ENCODE measurements at regions of chr6 and their contacts with region 1.

Region 1: DNA sequence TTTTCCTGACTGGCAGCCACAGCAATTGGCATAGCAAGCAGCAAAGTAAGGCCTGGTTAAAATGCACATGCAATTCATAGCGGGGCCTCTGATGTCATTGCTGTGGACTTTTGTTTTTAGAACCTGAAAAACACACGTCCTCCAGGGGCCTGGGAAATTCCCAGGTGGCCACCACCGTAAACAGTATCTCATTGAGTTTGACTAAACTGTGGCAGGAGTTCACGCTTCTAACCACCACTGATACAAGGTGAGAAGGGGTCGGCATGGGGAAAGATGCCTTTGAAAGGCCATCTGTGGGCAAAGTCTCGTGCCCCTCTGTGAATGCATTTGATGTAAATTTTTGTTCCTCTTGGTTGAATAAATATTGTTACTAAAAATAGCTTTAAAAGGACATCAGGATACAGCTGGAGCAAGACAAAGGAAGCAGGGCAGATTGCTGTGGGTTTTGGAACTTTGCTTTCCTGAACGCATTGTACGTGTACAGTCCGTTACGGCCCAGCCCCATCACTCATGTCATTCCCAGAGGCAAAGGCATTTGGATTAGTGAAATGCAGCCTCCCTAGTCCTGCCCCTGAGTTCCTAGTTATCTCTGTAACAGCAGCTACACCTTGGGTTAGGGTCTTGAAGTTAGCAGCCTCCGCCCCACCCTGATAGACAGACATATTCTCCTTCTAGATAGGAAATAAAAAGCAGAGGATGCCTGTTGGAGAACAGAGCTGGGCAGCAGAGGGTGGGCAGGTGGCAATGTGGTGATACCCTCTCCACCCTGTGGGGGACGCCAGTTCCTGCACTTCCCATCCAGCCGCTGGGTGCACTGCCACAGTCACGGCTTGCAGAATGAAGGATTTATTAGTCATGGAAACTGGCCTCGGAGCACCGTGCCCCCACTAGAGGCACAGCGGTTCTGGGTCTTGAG is 80.3 kb downstream of the ZDHHC14 start:
- DNase-seq: peak; percentile 91
- H3K4me3 Mint-ChIP-seq: peak overlapping the region; percentile 48
- H3K27ac Mint-ChIP-seq: peak overlapping the region; percentile 97
- H3K4me1 Mint-ChIP-seq: peaks cover 64% of the 10 kb centered on the region
- H3K27me3 Mint-ChIP-seq: no peaks in the 10 kb centered on the region

Region 2: DNA sequence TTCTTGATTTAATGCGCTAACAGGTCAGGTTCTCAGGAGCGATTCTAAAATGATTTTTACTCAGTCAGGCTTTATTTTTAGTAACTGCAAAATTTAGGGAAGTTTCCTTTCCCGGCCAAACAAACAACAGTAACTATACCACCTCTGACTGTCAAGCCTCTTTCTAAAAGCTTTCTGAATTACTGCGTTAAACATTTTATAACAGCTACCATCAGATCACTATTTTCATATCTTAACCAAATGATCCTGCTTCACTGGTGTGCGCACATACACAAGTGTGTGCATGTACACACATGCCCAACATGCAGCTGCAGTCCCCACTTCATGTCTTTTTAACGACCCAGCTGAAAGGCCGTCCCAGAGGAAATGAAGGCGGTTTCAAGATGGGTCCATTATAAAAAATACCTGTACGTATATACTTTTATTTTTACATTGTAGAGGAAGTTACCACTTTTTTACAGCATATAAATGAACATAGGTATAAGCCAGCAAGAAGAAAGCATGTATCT is 163.0 kb before region 1 on chr6:
- intact Hi-C with region 1: no loop called
- DNase-seq: no peak
- H3K4me3 Mint-ChIP-seq: no peak overlapping the region
- H3K27ac Mint-ChIP-seq: no peak overlapping the region
- H3K4me1 Mint-ChIP-seq: peaks cover 8% of the 10 kb centered on the region
- H3K27me3 Mint-ChIP-seq: no peaks in the 10 kb centered on the region

Region 3: GRCh38 chr6:157323255-157323965 is 137.8 kb before region 1 on chr6 and contains the start of gene TMEM242:
- intact Hi-C with region 1: loop called (anchors 2 kb)
- DNase-seq: peak; percentile 97
- H3K4me3 Mint-ChIP-seq: peak within 1 kb of the TSS; percentile 94
- H3K27ac Mint-ChIP-seq: peak within 1 kb of the TSS; percentile 92
- H3K4me1 Mint-ChIP-seq: peaks cover 39% of the 10 kb centered on the region
- H3K27me3 Mint-ChIP-seq: peaks cover 21% of the 10 kb centered on the region
- total RNA-seq, gene TMEM242: 10.1 and 10.7 TPM in 2 replicates

Region 4: GRCh38 chr6:157379656-157380454 is 81.4 kb before region 1 on chr6:
- intact Hi-C with region 1: loop called (anchors 1 kb)
- DNase-seq: peak; percentile 96
- H3K4me3 Mint-ChIP-seq: peak overlapping the region; percentile 82
- H3K27ac Mint-ChIP-seq: peak overlapping the region; percentile 85
- H3K4me1 Mint-ChIP-seq: peaks cover 31% of the 10 kb centered on the region
- H3K27me3 Mint-ChIP-seq: peaks cover 14% of the 10 kb centered on the region

Region 5: GRCh38 chr6:157443066-157443800 is 18.0 kb before region 1 on chr6:
- intact Hi-C with region 1: loop called (anchors 1 kb)
- DNase-seq: peak; percentile 67
- H3K4me3 Mint-ChIP-seq: no peak overlapping the region
- H3K27ac Mint-ChIP-seq: peak overlapping the region; percentile 74
- H3K4me1 Mint-ChIP-seq: peaks cover 19% of the 10 kb centered on the region
- H3K27me3 Mint-ChIP-seq: no peaks in the 10 kb centered on the region

Region 6: GRCh38 chr6:157535339-157536222 is 74.3 kb after region 1 on chr6:
- intact Hi-C with region 1: loop called (anchors 1 kb)
- DNase-seq: peak; percentile 76
- H3K4me3 Mint-ChIP-seq: peak overlapping the region; percentile 67
- H3K27ac Mint-ChIP-seq: peak overlapping the region; percentile 80
- H3K4me1 Mint-ChIP-seq: peaks cover 49% of the 10 kb centered on the region
- H3K27me3 Mint-ChIP-seq: peaks cover 8% of the 10 kb centered on the region

Region 7: DNA sequence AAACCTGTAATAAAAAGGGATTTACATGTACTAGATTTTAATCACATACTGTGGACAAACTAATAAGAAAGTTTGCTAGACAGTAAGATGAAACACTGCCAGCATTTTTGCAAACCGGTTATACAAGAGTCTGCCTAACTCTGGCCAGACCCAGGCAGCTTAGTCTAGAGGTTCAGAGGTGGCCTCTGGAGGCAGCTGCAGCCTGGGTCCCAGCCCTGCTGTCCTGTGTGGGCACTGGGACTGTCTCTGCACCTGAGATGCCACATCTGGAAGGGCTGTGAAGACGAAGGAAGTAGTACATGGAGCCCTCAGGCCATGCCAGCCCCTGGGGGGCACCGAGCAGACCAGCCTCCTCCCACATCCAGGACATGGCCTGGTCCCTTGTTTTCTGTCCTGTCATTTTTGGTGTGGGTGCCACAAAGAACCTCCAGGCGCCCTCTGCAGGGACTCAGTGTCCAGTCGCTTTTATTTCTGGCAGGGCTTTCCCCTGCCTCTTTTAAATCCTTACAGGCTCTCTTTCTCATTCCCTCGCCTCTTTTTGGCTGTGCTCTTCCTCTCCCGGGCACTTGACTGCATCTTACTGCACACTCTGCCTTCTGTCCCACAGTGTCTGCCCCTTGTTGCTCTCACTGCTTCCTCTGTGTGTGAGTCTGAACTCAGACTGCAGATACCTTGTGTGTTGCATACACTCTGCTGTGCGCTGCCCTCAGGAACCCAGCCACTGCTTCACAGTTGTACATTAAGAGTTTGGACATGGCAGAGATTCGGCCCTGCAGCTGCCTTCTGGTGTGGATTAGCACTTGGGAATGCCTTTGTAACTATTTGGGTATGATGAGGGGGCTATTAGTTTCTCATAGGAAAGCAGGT is 136.4 kb after region 1 on chr6:
- intact Hi-C with region 1: loop called (anchors 1 kb)
- DNase-seq: peak; percentile 80
- H3K4me3 Mint-ChIP-seq: no peak overlapping the region
- H3K27ac Mint-ChIP-seq: no peak overlapping the region
- H3K4me1 Mint-ChIP-seq: peaks cover 4% of the 10 kb centered on the region
- H3K27me3 Mint-ChIP-seq: no peaks in the 10 kb centered on the region

Region 8: DNA sequence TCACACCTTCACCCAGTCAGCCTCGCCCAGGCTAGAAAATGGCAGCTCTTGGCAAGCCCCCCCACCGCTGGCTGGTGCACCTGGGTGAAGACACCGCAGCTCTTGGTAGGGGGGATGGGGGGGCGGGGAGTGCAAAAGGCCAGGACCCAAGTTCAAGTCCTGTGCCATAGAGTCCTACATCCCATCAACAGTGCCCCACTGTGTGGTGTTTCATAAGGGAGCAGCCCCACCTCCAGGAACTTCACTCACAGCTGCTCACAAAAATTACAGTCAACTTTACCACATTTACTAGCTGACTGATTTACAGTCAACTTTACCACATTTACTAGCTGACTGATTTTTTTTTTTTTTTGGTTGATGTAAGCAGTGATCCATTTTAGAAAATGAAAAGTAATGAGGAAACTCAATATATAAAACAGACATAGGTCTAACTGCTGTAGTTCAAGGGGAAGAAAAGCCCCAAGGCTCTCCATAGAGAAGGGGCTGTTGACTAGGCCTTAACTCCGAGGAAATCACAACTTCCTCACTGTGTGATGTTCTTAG is 152.8 kb after region 1 on chr6:
- intact Hi-C with region 1: no loop called
- DNase-seq: no peak
- H3K4me3 Mint-ChIP-seq: no peak overlapping the region
- H3K27ac Mint-ChIP-seq: no peak overlapping the region
- H3K4me1 Mint-ChIP-seq: peaks cover 5% of the 10 kb centered on the region
- H3K27me3 Mint-ChIP-seq: no peaks in the 10 kb centered on the region

Region 9: GRCh38 chr6:157946865-157947532 is 485.7 kb after region 1 on chr6:
- intact Hi-C with region 1: loop called (anchors 10 kb)
- DNase-seq: peak; percentile 68
- H3K4me3 Mint-ChIP-seq: no peak overlapping the region
- H3K27ac Mint-ChIP-seq: no peak overlapping the region
- H3K4me1 Mint-ChIP-seq: peaks cover 21% of the 10 kb centered on the region
- H3K27me3 Mint-ChIP-seq: peaks cover 11% of the 10 kb centered on the region

Measured in activated CD4-positive, alpha-beta T cell treated with anti-CD3 and anti-CD28 coated beads, Interleukin-2, amount 10 ng/mL, durations not matched to agents 24 days and 14 days (primary cell).